Right lobe of liver (tissue), 6 donors: ENCODE measurements at regions of chr9 and their contacts with region 1.

Region 1: GRCh38 chr9:128103589-128103962 is 24.0 kb downstream of the PTGES2 start:
- DNase-seq: peak in 1 of 3 donors; percentile 83
- ATAC-seq: peak; percentile 1 to 17 (median 4)
- H3K4me3 ChIP-seq: peak overlapping the region in 2 of 3 donors; percentile 3 to 22
- H3K27ac ChIP-seq: peak overlapping the region; percentile 93 to 99 (median 94)
- H3K4me1 ChIP-seq: peaks cover 0 to 75% (median 30%) of the 10 kb centered on the region in 4 donors
- H3K27me3 ChIP-seq: no peaks in the 10 kb centered on the region
- CTCF ChIP-seq: peak in 3 of 4 donors; percentile 31 to 41 (median 35)
- POLR2A ChIP-seq: no peak

Region 2: DNA sequence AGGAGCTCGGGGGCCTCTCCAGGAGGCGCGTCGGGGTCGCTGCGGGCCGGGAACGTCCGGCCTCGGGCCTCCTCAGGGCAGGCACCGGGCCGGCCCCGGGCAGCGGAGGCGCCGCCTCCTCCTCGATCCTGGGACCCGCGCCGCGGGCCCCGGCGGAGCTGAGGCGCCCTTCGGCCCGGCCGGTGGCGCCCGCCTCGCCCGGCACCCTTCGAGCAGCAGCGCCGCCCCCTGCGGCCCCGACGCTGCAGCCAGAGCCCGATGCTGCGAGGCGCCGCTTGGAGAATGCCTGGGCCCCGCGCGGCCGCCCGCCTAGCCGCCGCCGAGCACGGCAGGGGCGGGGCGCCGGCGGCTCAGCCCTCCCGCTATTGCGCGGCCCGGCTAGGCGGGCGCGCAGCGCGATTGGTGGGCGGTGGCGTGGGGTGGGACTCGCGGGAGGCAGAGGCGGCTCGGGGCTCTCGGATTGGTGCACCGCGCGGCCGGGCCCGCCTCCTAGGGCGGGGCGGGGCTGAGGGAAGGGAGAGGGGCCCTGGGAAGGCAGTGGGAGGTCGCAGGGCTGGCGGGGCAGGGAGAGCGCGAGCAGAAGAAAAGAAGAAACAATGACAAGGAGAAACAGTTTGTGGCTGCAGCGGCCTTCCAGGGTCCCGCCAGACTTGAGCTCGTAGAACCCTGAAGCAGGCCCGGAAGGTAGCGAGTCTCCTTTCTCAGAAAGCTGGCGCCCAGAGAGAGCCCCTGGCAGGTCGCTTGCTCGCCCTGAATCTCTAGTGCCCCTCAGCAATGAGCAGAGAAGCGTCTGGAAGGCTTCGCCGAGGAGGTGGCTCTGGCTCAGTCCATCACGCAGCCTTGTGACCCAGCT is 122.6 kb before region 1 on chr9 and contains the start of gene EEIG1:
- intact Hi-C with region 1: loop called in 1 of 2 experiments (anchors 10 kb)
- DNase-seq: peak; percentile 97 to 98 (median 97)
- ATAC-seq: peak; percentile 83 to 92 (median 86)
- H3K4me3 ChIP-seq: peak within 1 kb of the TSS; percentile 86 to 100 (median 86)
- H3K27ac ChIP-seq: peak within 1 kb of the TSS; percentile 65 to 80 (median 75)
- H3K4me1 ChIP-seq: peaks cover 0 to 39% (median 9%) of the 10 kb centered on the region in 4 donors
- H3K27me3 ChIP-seq: no peaks in the 10 kb centered on the region
- CTCF ChIP-seq: no peak
- POLR2A ChIP-seq: peak; percentile 93
- total RNA-seq, gene EEIG1: 9.7 to 54.1 (median 23.6) TPM